ENCODE measurements at regions of chr12 and their contacts with region 1.

Region 1: DNA sequence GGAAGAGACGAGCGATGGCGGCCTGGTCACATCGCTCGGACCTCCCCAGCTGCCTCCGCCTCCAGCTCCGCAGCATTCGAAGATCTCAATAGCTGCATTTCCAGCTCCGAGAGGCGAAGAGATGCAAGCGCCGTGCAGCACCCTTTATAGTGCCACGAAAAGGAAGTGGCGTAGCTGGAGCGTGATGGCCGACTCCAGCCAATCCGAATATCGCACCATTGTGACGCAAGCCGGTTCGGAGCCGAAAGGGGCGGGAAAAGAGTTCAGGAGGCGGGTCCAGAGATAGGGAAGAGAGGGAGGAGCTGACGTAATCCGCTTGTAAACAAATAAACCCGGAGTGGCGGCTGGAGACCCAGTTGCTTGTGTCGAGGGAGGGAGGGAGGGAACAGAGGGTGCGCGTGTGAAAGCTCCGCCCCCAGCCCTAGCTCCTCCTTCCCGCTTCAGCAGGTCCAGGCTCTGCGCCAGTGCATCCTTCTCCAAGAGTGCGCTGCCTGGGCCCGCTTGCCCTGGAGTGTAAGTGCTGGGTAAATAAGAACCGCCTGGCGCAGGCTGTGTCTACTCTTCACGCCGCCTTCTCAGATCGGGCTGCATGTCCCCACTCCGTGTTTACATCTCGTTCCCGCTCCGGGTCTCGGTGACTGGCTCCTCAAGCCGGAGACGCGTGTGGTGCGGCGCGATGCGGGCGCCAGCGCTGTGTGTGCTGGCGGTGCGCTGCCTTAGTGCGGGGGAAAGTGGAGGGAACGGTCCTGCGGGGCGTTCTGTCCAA is at the start of gene BTG1:
- DNase-seq: peak; percentile 99
- H3K4me3 Mint-ChIP-seq: peak within 1 kb of the TSS; percentile 100
- H3K27ac Mint-ChIP-seq: peak within 1 kb of the TSS; percentile 100
- H3K4me1 Mint-ChIP-seq: peaks cover 23% of the 10 kb centered on the region
- H3K27me3 Mint-ChIP-seq: peaks cover 8% of the 10 kb centered on the region

Region 2: GRCh38 chr12:91811481-91812287 is 334.2 kb before region 1 on chr12:
- CTCF ChIA-PET with region 1: interaction called, 10 read pairs
- DNase-seq: peak; percentile 76
- H3K4me3 Mint-ChIP-seq: no peak overlapping the region
- H3K27ac Mint-ChIP-seq: no peak overlapping the region
- H3K4me1 Mint-ChIP-seq: peaks cover 10% of the 10 kb centered on the region
- H3K27me3 Mint-ChIP-seq: no peaks in the 10 kb centered on the region

Region 3: GRCh38 chr12:92108651-92109050 is 37.3 kb before region 1 on chr12:
- CTCF ChIA-PET with region 1: no interaction called
- DNase-seq: no peak
- H3K4me3 Mint-ChIP-seq: no peak overlapping the region
- H3K27ac Mint-ChIP-seq: no peak overlapping the region
- H3K4me1 Mint-ChIP-seq: peaks cover 69% of the 10 kb centered on the region
- H3K27me3 Mint-ChIP-seq: no peaks in the 10 kb centered on the region

Region 4: GRCh38 chr12:92133795-92134637 is 11.9 kb before region 1 on chr12:
- CTCF ChIA-PET with region 1: interaction called, 19 read pairs
- DNase-seq: no peak
- H3K4me3 Mint-ChIP-seq: peak overlapping the region; percentile 59
- H3K27ac Mint-ChIP-seq: peak overlapping the region; percentile 87
- H3K4me1 Mint-ChIP-seq: peaks cover 93% of the 10 kb centered on the region
- H3K27me3 Mint-ChIP-seq: no peaks in the 10 kb centered on the region

Region 5: GRCh38 chr12:92408072-92408900 is 262.4 kb after region 1 on chr12:
- CTCF ChIA-PET with region 1: interaction called, 29 read pairs
- DNase-seq: peak; percentile 71
- H3K4me3 Mint-ChIP-seq: no peak overlapping the region
- H3K27ac Mint-ChIP-seq: peak overlapping the region; percentile 64
- H3K4me1 Mint-ChIP-seq: peaks cover 52% of the 10 kb centered on the region
- H3K27me3 Mint-ChIP-seq: no peaks in the 10 kb centered on the region